ENCODE measurements at regions of chr15 and their contacts with region 1.

Region 1: GRCh38 chr15:89904519-89904918 is 8.2 kb downstream of the ARPIN start:
- DNase-seq: no peak
- H3K4me3 ChIP-seq: no peak overlapping the region
- H3K27ac ChIP-seq: no peak overlapping the region
- H3K4me1 ChIP-seq: no peaks in the 10 kb centered on the region
- H3K27me3 ChIP-seq: no peaks in the 10 kb centered on the region
- CTCF ChIP-seq: no peak
- POLR2A ChIP-seq: no peak

Region 2: GRCh38 chr15:89845305-89845893 is 59.1 kb before region 1 on chr15:
- intact Hi-C with region 1: no loop called
- DNase-seq: no peak
- H3K4me3 ChIP-seq: no peak overlapping the region
- H3K27ac ChIP-seq: no peak overlapping the region
- H3K4me1 ChIP-seq: no peaks in the 10 kb centered on the region
- H3K27me3 ChIP-seq: no peaks in the 10 kb centered on the region
- CTCF ChIP-seq: no peak
- POLR2A ChIP-seq: no peak

Region 3: GRCh38 chr15:90071208-90071807 is 166.8 kb after region 1 on chr15:
- intact Hi-C with region 1: loop called (anchors 5 kb)
- DNase-seq: peak; percentile 83 to 87
- H3K4me3 ChIP-seq: no peak overlapping the region
- H3K27ac ChIP-seq: no peak overlapping the region
- H3K4me1 ChIP-seq: peaks cover 8 to 27% of the 10 kb centered on the region in 2 donors
- H3K27me3 ChIP-seq: no peaks in the 10 kb centered on the region
- CTCF ChIP-seq: peak; percentile 46 to 84 (median 70)
- POLR2A ChIP-seq: no peak